ENCODE measurements at regions of chr6 and their contacts with region 1.

Region 1: GRCh38 chr6:83853178-83854000 is at the start of gene RIPPLY2:
- DNase-seq: peak; percentile 20
- ATAC-seq: peak; percentile 96
- H3K4me3 ChIP-seq: peak within 1 kb of the TSS; percentile 37
- H3K27ac ChIP-seq: no peak within 1 kb of the TSS
- H3K4me1 ChIP-seq: no peaks in the 10 kb centered on the region
- H3K27me3 ChIP-seq: peaks cover 21% of the 10 kb centered on the region
- CTCF ChIP-seq: no peak
- POLR2A ChIP-seq: no peak
- RAD21 ChIP-seq: no peak
- total RNA-seq, gene RIPPLY2: not detected in 2 replicates

Region 2: DNA sequence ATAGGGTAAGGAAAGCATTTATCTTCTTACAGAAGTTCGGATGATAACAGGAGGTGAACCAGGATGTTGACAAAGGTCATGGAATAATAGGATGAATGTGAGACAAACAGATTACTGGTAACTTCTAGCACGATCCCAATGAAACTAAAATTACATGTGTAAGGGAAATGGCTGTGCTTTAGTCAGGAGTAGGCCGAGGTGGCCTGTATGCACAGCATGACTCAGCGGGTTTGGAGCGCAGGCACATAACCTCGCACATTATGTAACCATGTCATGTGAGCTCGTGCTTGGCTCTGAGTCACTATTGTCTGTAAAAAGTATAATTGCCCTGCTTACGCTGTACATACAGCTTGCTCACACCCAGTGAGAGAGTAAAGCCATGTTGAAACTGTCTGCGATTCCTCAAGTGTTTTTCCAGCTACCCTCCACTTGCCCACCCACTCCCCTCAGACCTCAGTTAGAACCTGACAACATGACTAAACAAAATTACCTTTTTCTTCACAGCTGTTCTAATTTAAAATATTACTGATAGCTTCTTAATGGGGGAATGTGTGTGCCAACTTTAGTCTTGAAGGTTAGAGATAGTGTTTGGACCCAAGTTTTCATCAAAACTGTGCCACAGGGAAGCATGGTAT is 14.3 kb after region 1 on chr6:
- CTCF ChIA-PET with region 1: no interaction called
- POLR2A ChIA-PET with region 1: no interaction called
- dilution Hi-C with region 1: no loop called
- in situ Hi-C with region 1: no loop called
- intact Hi-C with region 1: no loop called
- DNase-seq: peak; percentile 92
- ATAC-seq: peak; percentile 82
- H3K4me3 ChIP-seq: no peak overlapping the region
- H3K27ac ChIP-seq: peak overlapping the region; percentile 37; the same call in 1 of the 2 replicates
- H3K4me1 ChIP-seq: peaks cover 5% of the 10 kb centered on the region
- H3K27me3 ChIP-seq: no peaks in the 10 kb centered on the region
- CTCF ChIP-seq: no peak
- POLR2A ChIP-seq: no peak
- RAD21 ChIP-seq: no peak

Region 3: DNA sequence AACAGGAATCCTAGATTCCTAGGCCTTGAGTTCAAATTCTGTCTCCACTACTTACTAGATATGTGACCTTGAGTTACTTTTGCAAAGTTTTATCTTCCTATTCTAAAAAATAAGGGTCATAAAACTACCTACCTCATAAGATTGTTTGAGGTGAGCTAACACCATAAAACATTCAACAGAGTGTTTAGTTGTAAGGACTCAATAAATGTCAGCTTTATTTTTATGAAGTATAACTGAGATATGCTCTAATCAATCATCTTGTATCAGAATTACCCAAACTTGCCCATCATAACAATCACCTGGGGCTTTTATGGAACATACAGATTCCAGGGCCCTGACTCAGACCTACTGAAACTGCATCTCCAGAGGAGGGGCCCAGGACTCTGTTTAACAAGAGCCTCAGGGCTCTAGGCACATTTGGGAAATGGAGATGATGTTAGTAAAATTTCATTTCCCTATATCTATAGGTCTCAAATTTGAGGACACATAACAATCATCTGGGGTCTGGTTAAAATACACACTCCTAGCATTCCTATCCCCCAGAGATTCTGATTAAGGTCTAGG is 144.7 kb after region 1 on chr6:
- CTCF ChIA-PET with region 1: no interaction called
- POLR2A ChIA-PET with region 1: interaction called, 18 read pairs
- dilution Hi-C with region 1: no loop called
- in situ Hi-C with region 1: no loop called
- intact Hi-C with region 1: no loop called
- DNase-seq: no peak
- ATAC-seq: no peak
- H3K4me3 ChIP-seq: no peak overlapping the region
- H3K27ac ChIP-seq: no peak overlapping the region
- H3K4me1 ChIP-seq: no peaks in the 10 kb centered on the region
- H3K27me3 ChIP-seq: peaks cover 2% of the 10 kb centered on the region; the same call in 1 of the 2 replicates
- CTCF ChIP-seq: no peak
- POLR2A ChIP-seq: no peak
- RAD21 ChIP-seq: no peak